ENCODE measurements at regions of chr7 and their contacts with region 1.

Region 1: GRCh38 chr7:66776800-66777442 is 36.4 kb downstream of the RABGEF1 start:
- DNase-seq: no peak
- ATAC-seq: no peak

Region 2: DNA sequence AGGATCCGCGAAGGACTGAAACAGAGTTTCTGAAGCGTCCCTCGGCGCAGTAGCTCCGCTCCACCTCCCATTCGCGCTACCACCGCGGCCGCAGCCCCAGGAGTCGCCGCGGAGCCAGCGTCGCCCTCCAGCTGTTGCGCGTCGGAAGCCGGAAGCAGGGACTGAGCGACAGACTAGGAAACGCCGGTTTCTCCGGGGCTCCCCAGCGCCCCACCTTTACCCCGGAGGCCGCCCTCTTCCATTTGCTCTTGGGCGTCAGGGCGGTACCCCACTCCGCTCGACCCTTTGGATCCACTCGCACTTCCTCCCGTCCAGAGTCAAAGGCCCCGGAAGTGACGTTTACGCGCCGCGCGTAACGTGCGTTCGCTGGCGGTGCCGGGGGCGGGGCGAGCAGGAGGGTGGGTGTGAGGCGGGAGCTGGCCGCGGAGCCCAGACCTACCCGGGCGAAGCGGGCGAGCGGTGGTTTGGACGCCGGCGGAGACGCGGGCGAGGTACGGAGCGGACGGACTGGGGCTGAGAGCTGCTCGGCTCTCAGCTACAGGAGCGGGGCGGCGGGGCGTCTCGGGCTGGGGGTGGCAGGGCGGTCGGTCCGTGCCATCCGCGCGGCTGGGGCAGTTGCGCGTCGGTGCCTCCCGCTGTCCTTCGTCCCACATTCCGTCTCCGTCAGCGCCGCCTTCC is 36.5 kb before region 1 on chr7 and contains the start of gene RABGEF1:
- intact Hi-C with region 1: no loop called
- DNase-seq: peak; percentile 99
- ATAC-seq: peak; percentile 97 to 98
- total RNA-seq, gene RABGEF1: 16.0 to 20.8 TPM

Region 3: DNA sequence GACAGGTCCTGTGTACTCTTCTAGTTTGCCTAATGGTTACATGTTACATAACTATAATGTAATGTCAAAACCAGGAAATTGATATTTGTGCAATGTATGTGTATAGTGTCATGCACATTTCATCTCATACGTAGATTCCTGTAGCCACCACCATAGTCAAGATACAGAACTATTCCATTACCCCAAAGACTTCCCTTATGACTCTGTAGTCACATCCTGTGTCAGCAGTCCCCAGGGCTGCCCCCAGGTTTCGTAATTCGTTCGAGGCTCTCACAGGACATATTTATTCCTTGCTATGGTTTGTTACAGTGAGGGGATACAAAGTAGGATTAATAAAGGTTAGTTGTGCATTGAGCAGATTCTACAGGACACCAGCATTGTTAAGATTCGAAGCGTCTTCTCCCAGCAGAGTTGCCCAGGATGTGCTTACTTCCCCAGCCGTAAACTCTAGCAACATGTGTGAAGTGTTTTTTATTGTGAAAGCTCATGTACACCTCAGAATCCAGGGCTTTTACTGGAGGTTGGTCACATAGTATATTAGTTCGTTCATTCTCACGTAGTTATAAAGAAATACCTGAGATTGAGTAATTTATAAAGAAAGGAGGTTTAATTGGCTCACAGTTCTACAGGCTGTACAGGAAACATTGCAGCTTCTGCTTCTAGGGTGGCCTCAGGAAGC is 17.8 kb before region 1 on chr7:
- intact Hi-C with region 1: loop called in 1 of 2 experiments (anchors 2 kb)
- DNase-seq: no peak
- ATAC-seq: peak; percentile 23 to 65